Dendritic cell treated with granulocyte-macrophage colony-stimulating factor and Interleukin-4, amounts not matched to agents 40 ng/mL and 50 ng/mL, for 4 days (primary cell): ENCODE measurements at regions of chr5 and their contacts with region 1.

Region 1: GRCh38 chr5:72988769-72989168 is 32.9 kb downstream of the FCHO2 start:
- H3K4me3 Mint-ChIP-seq: no peak overlapping the region
- H3K27ac Mint-ChIP-seq: no peak overlapping the region
- H3K4me1 Mint-ChIP-seq: peaks cover 6% of the 10 kb centered on the region
- H3K27me3 Mint-ChIP-seq: no peaks in the 10 kb centered on the region

Region 2: DNA sequence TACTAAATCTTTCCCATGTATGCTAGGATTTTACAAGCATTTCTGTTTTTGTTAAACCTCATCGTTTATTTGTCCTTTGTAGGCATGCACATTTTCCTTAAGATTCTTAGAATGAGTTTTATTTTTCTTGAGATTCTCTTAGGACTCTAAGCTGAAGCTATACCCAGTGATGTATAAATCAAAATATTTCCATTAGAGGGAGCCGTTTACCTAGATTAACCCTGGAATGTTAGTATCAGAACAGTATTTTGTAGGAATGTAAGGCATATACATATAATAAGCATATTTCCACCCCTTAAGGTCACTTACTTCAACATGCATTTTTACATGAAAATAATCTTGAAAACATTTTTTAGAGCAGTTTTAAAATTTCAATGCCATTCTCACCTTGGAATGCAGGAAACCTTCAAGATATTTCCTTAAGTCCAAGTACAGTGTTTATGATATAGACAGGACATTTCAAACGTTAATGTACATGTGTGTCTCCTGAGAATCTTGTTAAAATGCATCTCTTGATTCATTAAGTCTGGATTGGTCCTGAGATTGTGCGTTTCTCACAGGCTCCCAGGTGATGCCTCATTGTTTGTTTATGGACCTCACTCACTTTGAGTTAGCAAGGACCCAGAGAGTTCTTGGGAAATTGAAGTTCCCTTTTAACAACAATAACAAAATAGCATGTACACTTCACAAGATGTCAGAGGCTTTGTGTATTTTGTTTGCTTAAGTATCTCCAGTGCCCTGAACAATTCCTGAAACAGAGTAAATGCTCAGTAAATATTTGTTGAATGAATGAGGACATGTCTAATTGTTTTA is 67.9 kb before region 1 on chr5:
- intact Hi-C with region 1: loop called (anchors 5 kb)
- H3K4me3 Mint-ChIP-seq: no peak overlapping the region
- H3K27ac Mint-ChIP-seq: peak overlapping the region; percentile 53
- H3K4me1 Mint-ChIP-seq: peaks cover 13% of the 10 kb centered on the region
- H3K27me3 Mint-ChIP-seq: peaks cover 3% of the 10 kb centered on the region